Sigmoid colon (tissue), 7 donors: ENCODE measurements at regions of chr14 and their contacts with region 1.

Region 1: GRCh38 chr14:69090187-69090789 is 62.6 kb downstream of the DCAF5 start:
- DNase-seq: no peak
- H3K4me3 ChIP-seq: no peak overlapping the region
- H3K27ac ChIP-seq: peak overlapping the region; percentile 83 to 88 (median 86)
- H3K4me1 ChIP-seq: peaks cover 0 to 85% (median 69%) of the 10 kb centered on the region in 4 donors
- H3K27me3 ChIP-seq: no peaks in the 10 kb centered on the region
- CTCF ChIP-seq: peak in 3 of 4 experiments; percentile 61 to 64 (median 62)
- EP300 ChIP-seq: no peak
- POLR2A ChIP-seq: no peak

Region 2: GRCh38 chr14:68911594-68912227 is 178.6 kb before region 1 on chr14:
- intact Hi-C with region 1: loop called (anchors 2 kb)
- DNase-seq: peak; percentile 91
- H3K4me3 ChIP-seq: no peak overlapping the region
- H3K27ac ChIP-seq: peak overlapping the region; percentile 98 to 100 (median 100)
- H3K4me1 ChIP-seq: peaks cover 0 to 95% (median 87%) of the 10 kb centered on the region in 4 donors
- H3K27me3 ChIP-seq: no peaks in the 10 kb centered on the region
- CTCF ChIP-seq: peak; percentile 96 to 99 (median 97)
- EP300 ChIP-seq: no peak
- POLR2A ChIP-seq: no peak

Region 3: GRCh38 chr14:69043596-69044260 is 46.6 kb before region 1 on chr14:
- intact Hi-C with region 1: loop called (anchors 5 kb)
- DNase-seq: peak; percentile 79
- H3K4me3 ChIP-seq: no peak overlapping the region
- H3K27ac ChIP-seq: peak overlapping the region; percentile 72 to 89 (median 74)
- H3K4me1 ChIP-seq: peaks cover 0 to 63% (median 59%) of the 10 kb centered on the region in 4 donors
- H3K27me3 ChIP-seq: no peaks in the 10 kb centered on the region
- CTCF ChIP-seq: no peak
- EP300 ChIP-seq: peak in 1 of 4 donors; percentile 51
- POLR2A ChIP-seq: no peak

Region 4: GRCh38 chr14:70188659-70189455 is 1098.6 kb after region 1 on chr14 and contains the start of gene SLC8A3:
- intact Hi-C with region 1: no loop called
- DNase-seq: no peak
- H3K4me3 ChIP-seq: peak within 1 kb of the TSS in 3 of 4 donors; percentile 29 to 50 (median 42)
- H3K27ac ChIP-seq: no peak within 1 kb of the TSS
- H3K4me1 ChIP-seq: peaks cover 0 to 28% (median 22%) of the 10 kb centered on the region in 4 donors
- H3K27me3 ChIP-seq: peaks cover 18 to 67% (median 33%) of the 10 kb centered on the region in 3 donors
- CTCF ChIP-seq: no peak
- EP300 ChIP-seq: no peak
- POLR2A ChIP-seq: no peak
- total RNA-seq, gene SLC8A3: 0.27 to 0.82 (median 0.36) TPM in 3 of 4 donors, not detected in the other